ENCODE measurements at regions of chr20 and their contacts with region 1.

Region 1: DNA sequence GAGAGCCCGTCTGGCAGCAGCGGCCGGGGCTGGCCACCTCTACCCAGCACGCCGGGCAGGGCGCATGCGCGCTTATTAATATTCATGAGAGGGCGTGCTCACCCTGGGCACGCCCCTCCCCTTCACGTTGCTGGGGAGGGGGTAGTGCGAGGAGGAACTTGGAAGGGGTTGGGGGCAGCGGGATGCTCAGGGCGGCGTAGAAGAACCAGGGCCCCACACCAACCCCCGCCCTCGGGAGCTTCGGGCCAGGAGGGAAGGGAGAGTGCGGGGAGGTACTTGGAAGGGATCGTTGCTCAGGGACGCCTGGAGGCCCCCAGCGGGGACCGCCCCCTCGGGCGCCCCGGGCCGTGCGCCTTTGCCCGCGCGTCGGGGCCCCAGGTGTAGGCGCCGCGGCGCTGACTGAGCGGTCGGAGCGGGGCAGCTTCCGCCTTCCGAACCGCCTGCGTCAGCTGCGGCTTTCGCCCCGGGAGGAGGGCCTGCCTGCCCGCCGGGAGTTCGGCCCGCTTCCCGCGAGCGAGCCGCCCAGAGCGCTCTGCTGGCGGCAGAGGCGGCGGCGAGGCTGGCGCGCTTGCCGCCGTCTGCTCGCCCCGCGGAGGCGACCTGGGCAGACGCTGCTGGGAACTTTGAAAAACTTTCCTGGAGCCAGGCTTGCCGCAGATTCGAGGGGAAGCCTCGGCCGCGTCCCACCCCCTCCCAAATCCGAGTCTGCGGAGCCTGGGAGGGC is at the start of gene JAG1:
- DNase-seq: peak; percentile 79 to 97
- H3K4me3 ChIP-seq: peak within 1 kb of the TSS; percentile 84
- H3K27ac ChIP-seq: peak within 1 kb of the TSS; percentile 97
- H3K4me1 ChIP-seq: peaks cover 16% of the 10 kb centered on the region
- H3K27me3 ChIP-seq: no peaks in the 10 kb centered on the region
- CTCF ChIP-seq: no peak
- total RNA-seq, gene JAG1: 42.9 and 51.5 TPM in 2 replicates

Region 2: DNA sequence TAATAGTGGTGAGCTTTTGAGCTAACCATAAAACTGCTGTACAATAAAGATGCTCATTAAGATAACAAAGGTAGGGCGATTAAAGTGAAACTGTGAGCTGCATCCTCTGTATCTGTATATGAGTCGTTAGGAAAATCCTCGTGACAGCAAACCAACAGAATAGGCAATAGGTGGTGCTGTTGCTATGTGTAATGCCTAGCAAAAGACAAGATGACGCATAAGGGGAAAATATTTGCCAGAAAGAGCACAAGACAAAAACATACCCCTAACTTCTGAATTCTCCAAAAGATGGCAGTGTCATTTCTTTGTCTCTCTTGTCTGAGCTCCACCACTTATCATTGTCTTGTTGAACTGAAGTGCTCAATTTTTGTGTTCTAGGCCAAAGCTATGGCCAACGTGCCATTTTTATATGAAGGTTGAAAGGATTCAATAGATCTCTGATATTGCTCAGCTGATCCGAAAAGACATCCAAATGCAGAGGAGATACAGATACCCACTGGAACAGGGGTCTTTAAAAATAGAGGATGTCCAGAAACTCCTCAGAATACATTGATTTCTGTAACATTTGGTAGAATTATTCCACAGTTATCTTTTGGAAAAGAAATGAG is 695.6 kb before region 1 on chr20:
- CTCF ChIA-PET with region 1: no interaction called
- POLR2A ChIA-PET with region 1: no interaction called
- intact Hi-C with region 1: loop called (anchors 5 kb)
- DNase-seq: peak; percentile 35 to 74
- H3K4me3 ChIP-seq: peak overlapping the region; percentile 19; the same call in 1 of the 2 replicates
- H3K27ac ChIP-seq: no peak overlapping the region
- H3K4me1 ChIP-seq: peaks cover 11% of the 10 kb centered on the region; the same call in 1 of the 2 replicates
- H3K27me3 ChIP-seq: no peaks in the 10 kb centered on the region
- CTCF ChIP-seq: peak; percentile 81

Region 3: GRCh38 chr20:10596726-10597125 is 77.4 kb before region 1 on chr20:
- CTCF ChIA-PET with region 1: interaction called, 4 read pairs
- POLR2A ChIA-PET with region 1: interaction called, 11 read pairs
- intact Hi-C with region 1: loop called (anchors 5 kb)
- DNase-seq: no peak
- H3K4me3 ChIP-seq: no peak overlapping the region
- H3K27ac ChIP-seq: no peak overlapping the region
- H3K4me1 ChIP-seq: peaks cover 38% of the 10 kb centered on the region
- H3K27me3 ChIP-seq: no peaks in the 10 kb centered on the region
- CTCF ChIP-seq: no peak

Region 4: GRCh38 chr20:10864076-10864918 is 190.1 kb after region 1 on chr20:
- CTCF ChIA-PET with region 1: no interaction called
- POLR2A ChIA-PET with region 1: interaction called, 6 read pairs
- intact Hi-C with region 1: loop called (anchors 2 kb)
- DNase-seq: peak; percentile 65 to 81
- H3K4me3 ChIP-seq: peak overlapping the region; percentile 10; the same call in 1 of the 2 replicates
- H3K27ac ChIP-seq: peak overlapping the region; percentile 75
- H3K4me1 ChIP-seq: peaks cover 42% of the 10 kb centered on the region
- H3K27me3 ChIP-seq: no peaks in the 10 kb centered on the region
- CTCF ChIP-seq: no peak

Region 5: DNA sequence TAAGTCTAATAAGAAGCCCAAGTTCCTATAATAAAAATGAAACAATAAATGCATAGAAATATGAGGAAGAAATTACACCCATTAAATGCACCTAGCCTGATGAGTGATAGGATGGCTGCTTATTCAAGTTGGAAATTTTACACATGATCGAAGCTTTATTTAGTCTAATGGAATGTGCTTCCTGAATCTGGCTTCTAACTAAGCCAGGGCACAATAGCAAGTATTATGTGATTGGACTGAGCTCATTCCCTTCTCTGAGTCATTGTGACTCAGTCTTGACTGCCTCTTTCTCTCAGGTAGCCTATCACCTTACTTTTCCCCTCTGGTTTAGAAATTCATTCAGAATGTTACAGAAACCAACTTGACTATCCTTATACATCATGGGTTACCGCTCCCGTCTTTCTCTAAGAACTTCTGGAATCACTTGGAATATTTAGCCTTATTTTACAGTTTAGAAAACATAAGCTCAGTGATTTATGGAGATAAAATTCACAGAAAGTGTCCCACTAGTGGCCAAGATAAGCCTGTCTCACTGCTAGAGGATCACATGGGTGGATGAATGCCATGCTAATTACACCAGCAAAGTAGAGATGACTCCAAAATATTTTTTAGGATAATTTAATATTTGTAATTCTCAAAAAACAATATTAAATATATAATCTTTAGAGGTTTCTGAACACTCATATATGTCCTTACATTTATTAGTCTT is 504.9 kb after region 1 on chr20:
- CTCF ChIA-PET with region 1: interaction called, 6 read pairs
- POLR2A ChIA-PET with region 1: interaction called, 4 read pairs
- intact Hi-C with region 1: loop called (anchors 1 kb)
- DNase-seq: peak; percentile 37 to 92
- H3K4me3 ChIP-seq: no peak overlapping the region
- H3K27ac ChIP-seq: peak overlapping the region; percentile 84
- H3K4me1 ChIP-seq: peaks cover 21% of the 10 kb centered on the region
- H3K27me3 ChIP-seq: no peaks in the 10 kb centered on the region
- CTCF ChIP-seq: no peak

Region 6: GRCh38 chr20:11387189-11387754 is 713.1 kb after region 1 on chr20:
- CTCF ChIA-PET with region 1: no interaction called
- POLR2A ChIA-PET with region 1: no interaction called
- intact Hi-C with region 1: loop called (anchors 5 kb)
- DNase-seq: peak; percentile 55 to 73
- H3K4me3 ChIP-seq: no peak overlapping the region
- H3K27ac ChIP-seq: peak overlapping the region; percentile 85
- H3K4me1 ChIP-seq: peaks cover 23% of the 10 kb centered on the region
- H3K27me3 ChIP-seq: no peaks in the 10 kb centered on the region
- CTCF ChIP-seq: no peak

Measured in PC-9 (cell line).